WTC11 (cell line): ENCODE measurements at regions of chr3 and their contacts with region 1.

Region 1: DNA sequence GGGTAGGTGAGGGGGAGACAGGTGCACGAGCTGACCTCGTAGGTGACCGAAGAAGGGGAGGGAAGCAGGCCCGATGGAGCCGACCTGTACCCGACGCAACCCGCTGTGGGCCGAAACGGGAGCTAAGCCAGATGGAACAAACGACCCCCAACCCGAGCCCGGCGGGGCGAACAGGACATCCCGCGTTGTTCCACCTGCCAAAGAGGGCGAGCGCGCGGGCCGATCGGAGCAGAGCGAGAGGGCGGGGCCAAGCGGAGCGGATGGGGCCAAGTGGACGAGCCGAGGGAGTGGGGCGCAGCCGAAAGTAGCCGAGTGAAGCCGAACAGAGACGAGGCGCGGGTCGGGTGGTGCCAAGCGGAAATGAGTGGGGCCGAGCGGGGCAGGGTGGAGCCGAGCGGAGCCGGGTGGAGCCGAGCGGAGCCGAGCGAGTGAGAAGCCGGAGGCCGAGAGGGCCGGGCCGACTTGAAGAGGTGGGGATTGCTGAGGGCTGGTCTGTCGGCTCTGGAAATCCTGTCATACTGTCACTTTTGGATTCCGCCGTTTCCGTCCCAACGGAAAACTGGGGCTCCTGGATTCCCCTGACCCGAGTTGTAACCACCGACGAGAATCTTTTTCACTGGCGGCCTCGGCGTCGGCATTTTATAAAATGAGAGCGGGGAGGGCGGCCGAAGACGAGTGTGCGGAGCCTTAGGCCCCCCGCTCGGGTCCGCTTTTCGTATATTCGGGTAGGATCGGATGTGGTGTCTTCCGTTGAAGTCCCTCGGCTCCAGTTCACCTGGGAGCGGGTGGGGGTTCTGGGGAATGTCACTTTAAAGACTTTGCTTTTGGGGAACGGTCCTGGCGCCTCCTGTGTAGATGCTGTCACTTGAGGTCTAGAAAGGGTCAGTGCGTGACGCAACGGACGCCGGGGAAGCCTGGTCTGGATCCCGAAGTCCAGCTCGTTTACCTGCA is 15.6 kb upstream of the WNT7A start:
- DNase-seq: peak; percentile 98
- ATAC-seq: peak; percentile 99
- H3K4me3 Mint-ChIP-seq: peak overlapping the region; percentile 89
- H3K27ac Mint-ChIP-seq: no peak overlapping the region
- H3K4me1 Mint-ChIP-seq: peaks cover 13% of the 10 kb centered on the region
- H3K27me3 Mint-ChIP-seq: peaks cover 32% of the 10 kb centered on the region
- CTCF ChIP-seq: no peak

Region 2: DNA sequence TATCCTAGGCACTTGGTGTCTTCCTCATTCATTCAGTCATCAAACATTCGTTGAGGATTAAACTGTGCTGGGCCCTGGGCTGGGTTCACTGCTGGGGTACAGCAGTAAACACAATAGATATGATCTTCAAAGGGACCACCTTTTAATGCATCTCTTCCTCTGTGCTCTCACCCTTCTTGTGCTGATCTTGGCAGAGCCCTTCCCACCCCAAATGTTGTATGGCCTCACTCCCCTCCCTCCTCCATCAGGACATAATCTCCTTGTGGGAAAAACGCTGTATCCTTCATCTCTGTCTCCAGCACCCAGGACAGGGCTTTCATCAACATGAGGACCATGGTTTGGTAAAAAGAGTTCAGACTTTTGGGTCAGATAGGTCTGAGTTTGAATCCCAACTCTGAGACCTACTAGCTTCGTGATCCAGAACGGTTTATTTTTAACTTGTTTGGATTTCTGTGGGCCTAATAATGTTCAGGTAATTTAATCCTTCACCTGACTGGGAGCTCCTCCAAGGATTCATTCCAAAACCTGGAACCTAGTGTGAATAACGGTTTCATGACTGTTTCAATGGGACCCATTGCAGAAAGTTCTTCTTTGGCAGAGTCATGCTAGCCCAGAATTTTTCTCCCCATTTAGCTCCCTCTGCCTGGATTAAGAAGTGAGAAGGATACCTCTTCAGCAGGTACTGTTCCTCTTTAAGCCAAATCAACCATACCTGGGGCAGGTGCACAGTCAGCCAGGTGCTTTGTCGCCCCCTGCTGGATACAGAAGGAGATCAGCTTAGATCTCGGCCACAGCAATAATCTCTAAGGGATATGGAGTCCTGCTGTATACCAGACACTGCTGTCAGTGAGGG is 10.4 kb before region 1 on chr3:
- CTCF ChIA-PET with region 1: interaction called, 25 read pairs
- POLR2A ChIA-PET with region 1: no interaction called
- DNase-seq: peak; percentile 77
- ATAC-seq: peak; percentile 84
- H3K4me3 Mint-ChIP-seq: no peak overlapping the region
- H3K27ac Mint-ChIP-seq: no peak overlapping the region
- H3K4me1 Mint-ChIP-seq: no peaks in the 10 kb centered on the region
- H3K27me3 Mint-ChIP-seq: peaks cover 82% of the 10 kb centered on the region
- CTCF ChIP-seq: peak; percentile 88

Region 3: DNA sequence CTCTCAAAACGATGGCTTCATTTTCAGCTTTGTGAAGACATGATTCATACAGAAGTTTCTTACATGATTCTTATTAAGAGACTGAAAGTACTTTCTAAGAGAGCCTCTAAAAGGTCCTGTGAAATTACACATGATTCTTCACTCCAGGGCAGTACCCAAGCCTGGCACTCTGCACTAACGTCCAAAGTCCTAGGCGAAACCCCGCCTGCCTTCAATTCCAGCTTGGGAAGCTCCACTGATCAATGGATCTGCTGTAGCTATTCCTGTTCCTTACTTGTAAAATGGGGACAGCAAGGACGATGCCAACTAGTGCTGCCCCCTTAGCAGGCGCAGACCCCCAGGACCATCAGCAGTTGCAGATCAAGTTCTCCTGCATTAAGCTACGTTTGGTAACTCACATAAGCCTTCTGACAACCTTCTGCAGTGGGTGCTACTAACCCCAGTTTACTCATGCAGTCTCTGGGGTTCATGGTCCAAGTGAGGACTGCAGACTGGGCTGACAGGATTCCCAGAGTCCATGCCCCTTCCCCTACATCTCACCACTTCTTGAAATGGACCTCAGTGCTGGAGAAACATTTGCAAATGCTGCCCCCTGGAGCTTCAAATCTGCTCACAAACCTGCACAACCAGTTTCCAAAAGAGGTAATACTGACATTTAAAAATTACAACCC is 218.7 kb after region 1 on chr3:
- CTCF ChIA-PET with region 1: interaction called, 56 read pairs
- POLR2A ChIA-PET with region 1: no interaction called
- DNase-seq: no peak
- ATAC-seq: no peak
- H3K4me3 Mint-ChIP-seq: no peak overlapping the region
- H3K27ac Mint-ChIP-seq: no peak overlapping the region
- H3K4me1 Mint-ChIP-seq: peaks cover 20% of the 10 kb centered on the region
- H3K27me3 Mint-ChIP-seq: no peaks in the 10 kb centered on the region
- CTCF ChIP-seq: no peak

Region 4: GRCh38 chr3:14124615-14125190 is 229.3 kb after region 1 on chr3 and contains the starts of genes CHCHD4 and TMEM43:
- CTCF ChIA-PET with region 1: interaction called, 98 read pairs
- POLR2A ChIA-PET with region 1: interaction called, 17 read pairs
- DNase-seq: peak; percentile 99
- ATAC-seq: peak; percentile 79
- H3K4me3 Mint-ChIP-seq: peak within 1 kb of the TSS; percentile 100
- H3K27ac Mint-ChIP-seq: peak within 1 kb of the TSS; percentile 96
- H3K4me1 Mint-ChIP-seq: peaks cover 40% of the 10 kb centered on the region
- H3K27me3 Mint-ChIP-seq: no peaks in the 10 kb centered on the region
- CTCF ChIP-seq: no peak
- total RNA-seq, gene CHCHD4: 20.9 to 27.5 TPM (median 21.4 TPM) in 3 replicates
- total RNA-seq, gene TMEM43: 23.9 to 27.7 TPM (median 24.1 TPM) in 3 replicates

Region 5: DNA sequence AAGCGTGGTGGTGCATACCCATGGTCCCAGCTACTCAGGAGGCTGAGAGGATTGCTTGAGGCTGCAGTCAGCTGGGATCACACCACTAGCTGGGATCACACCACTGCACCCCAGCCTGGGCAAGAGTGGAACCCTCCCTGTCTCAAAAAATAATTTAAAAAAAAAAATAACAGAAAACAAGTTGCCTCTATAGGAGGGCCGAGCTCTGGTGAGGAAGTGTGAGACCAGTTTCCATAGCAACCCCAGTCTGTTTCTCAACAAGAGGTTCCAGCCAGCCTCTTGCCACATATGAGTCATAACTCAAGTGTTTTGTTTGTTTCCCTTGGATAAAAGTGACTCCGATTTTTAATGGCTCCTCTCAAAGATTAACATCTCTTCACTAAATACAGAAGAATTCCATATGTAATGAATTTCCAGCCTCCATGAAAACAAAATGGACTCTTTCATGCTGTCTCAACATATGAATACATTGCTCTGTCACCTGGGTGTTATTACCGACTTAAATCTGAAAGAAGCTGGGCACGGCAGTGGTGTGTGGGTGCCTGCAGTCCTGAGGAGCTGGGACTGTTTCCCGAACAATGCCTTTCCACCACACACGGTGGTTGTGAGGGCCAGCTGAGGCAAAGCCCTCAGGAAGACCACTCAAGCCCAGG is 249.1 kb after region 1 on chr3:
- CTCF ChIA-PET with region 1: interaction called, 24 read pairs
- POLR2A ChIA-PET with region 1: interaction called, 3 read pairs
- DNase-seq: no peak
- ATAC-seq: peak; percentile 10; the same call in 1 of the 2 replicates
- H3K4me3 Mint-ChIP-seq: no peak overlapping the region
- H3K27ac Mint-ChIP-seq: peak overlapping the region; percentile 88
- H3K4me1 Mint-ChIP-seq: peaks cover 31% of the 10 kb centered on the region
- H3K27me3 Mint-ChIP-seq: no peaks in the 10 kb centered on the region
- CTCF ChIP-seq: no peak

Region 6: DNA sequence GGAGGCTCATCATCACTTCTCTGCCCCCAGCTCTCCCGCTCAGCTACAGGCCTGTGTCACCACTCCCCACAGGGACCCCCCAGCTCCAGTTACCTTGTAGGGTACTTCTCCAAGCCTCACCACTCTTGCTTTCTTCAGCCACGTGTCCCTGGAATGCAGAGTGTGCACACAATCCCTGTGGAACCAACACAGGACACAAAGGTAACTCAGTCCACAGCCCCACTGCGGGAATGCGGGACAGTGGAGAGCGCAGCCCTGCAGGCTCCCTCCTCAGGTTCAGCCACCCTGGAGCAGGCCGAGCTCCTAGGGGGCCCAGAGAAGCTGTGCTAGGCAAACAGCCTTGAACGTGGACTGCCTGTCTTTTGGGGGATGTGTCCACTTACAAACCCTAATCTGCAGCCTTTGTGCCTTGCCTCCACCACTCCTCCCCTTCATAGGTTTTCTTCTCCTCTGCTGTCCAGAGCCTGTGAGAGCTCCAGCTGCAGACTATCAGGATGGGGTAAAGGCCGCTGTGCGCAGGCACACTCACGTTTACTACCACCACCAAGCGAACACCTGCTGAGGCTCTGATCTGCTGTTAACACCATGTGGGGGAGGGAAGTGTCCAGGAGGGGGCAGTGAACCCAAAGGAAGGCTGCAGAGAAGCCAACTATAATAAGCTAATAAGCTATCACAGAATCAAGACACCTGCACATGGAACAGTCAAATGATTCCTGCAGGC is 257.0 kb after region 1 on chr3:
- CTCF ChIA-PET with region 1: interaction called, 24 read pairs
- POLR2A ChIA-PET with region 1: no interaction called
- DNase-seq: no peak
- ATAC-seq: peak; percentile 13; the same call in 1 of the 2 replicates
- H3K4me3 Mint-ChIP-seq: no peak overlapping the region
- H3K27ac Mint-ChIP-seq: no peak overlapping the region
- H3K4me1 Mint-ChIP-seq: peaks cover 14% of the 10 kb centered on the region
- H3K27me3 Mint-ChIP-seq: no peaks in the 10 kb centered on the region
- CTCF ChIP-seq: no peak

Region 7: GRCh38 chr3:14178247-14179113 is 283.1 kb after region 1 on chr3 and contains the starts of genes LSM3 and XPC:
- CTCF ChIA-PET with region 1: interaction called, 22 read pairs
- POLR2A ChIA-PET with region 1: no interaction called
- DNase-seq: peak; percentile 92
- ATAC-seq: peak; percentile 99
- H3K4me3 Mint-ChIP-seq: peak within 1 kb of the TSS; percentile 93
- H3K27ac Mint-ChIP-seq: peak within 1 kb of the TSS; percentile 99
- H3K4me1 Mint-ChIP-seq: peaks cover 29% of the 10 kb centered on the region
- H3K27me3 Mint-ChIP-seq: no peaks in the 10 kb centered on the region
- CTCF ChIP-seq: no peak
- total RNA-seq, gene LSM3: 17.7 to 21.4 TPM (median 17.8 TPM) in 3 replicates
- total RNA-seq, gene XPC: 31.7 to 34.9 TPM (median 32.6 TPM) in 3 replicates